Endothelial cell of umbilical vein (primary cell): ENCODE measurements at regions of chr16 and their contacts with region 1.

Region 1: GRCh38 chr16:11346700-11347319 is 1.6 kb downstream of the RMI2 start:
- DNase-seq: no peak
- H3K4me3 ChIP-seq: no peak overlapping the region
- H3K27ac ChIP-seq: no peak overlapping the region
- H3K4me1 ChIP-seq: peaks cover 5% of the 10 kb centered on the region
- H3K27me3 ChIP-seq: peaks cover 0 to 2% of the 10 kb centered on the region in 2 experiments
- CTCF ChIP-seq: no peak
- POLR2A ChIP-seq: no peak

Region 2: GRCh38 chr16:12141073-12141951 is 794.5 kb after region 1 on chr16:
- CTCF ChIA-PET with region 1: no interaction called
- POLR2A ChIA-PET with region 1: interaction called, 10 read pairs
- dilution Hi-C with region 1: no loop called
- intact Hi-C with region 1: no loop called
- DNase-seq: no peak
- H3K4me3 ChIP-seq: no peak overlapping the region
- H3K27ac ChIP-seq: no peak overlapping the region
- H3K4me1 ChIP-seq: peaks cover 8% of the 10 kb centered on the region
- H3K27me3 ChIP-seq: no peaks in the 10 kb centered on the region
- CTCF ChIP-seq: no peak
- POLR2A ChIP-seq: no peak